ENCODE measurements at regions of chr17 and their contacts with region 1.

Region 1: GRCh38 chr17:72725433-72726068 is 366.9 kb downstream of the SLC39A11 start:
- DNase-seq: peak; percentile 88
- ATAC-seq: peak; percentile 74
- H3K4me3 ChIP-seq: no peak overlapping the region
- H3K27ac ChIP-seq: peak overlapping the region; percentile 69
- H3K4me1 ChIP-seq: peaks cover 42% of the 10 kb centered on the region
- H3K27me3 ChIP-seq: no peaks in the 10 kb centered on the region
- CTCF ChIP-seq: peak; percentile 99

Region 2: GRCh38 chr17:72556944-72557826 is 168.4 kb before region 1 on chr17:
- CTCF ChIA-PET with region 1: interaction called, 131 read pairs
- POLR2A ChIA-PET with region 1: interaction called, 3 read pairs
- intact Hi-C with region 1: loop called (anchors 1 kb)
- DNase-seq: peak; percentile 89
- ATAC-seq: peak; percentile 48
- H3K4me3 ChIP-seq: no peak overlapping the region
- H3K27ac ChIP-seq: no peak overlapping the region
- H3K4me1 ChIP-seq: peaks cover 20% of the 10 kb centered on the region
- H3K27me3 ChIP-seq: no peaks in the 10 kb centered on the region
- CTCF ChIP-seq: peak; percentile 98

Region 3: DNA sequence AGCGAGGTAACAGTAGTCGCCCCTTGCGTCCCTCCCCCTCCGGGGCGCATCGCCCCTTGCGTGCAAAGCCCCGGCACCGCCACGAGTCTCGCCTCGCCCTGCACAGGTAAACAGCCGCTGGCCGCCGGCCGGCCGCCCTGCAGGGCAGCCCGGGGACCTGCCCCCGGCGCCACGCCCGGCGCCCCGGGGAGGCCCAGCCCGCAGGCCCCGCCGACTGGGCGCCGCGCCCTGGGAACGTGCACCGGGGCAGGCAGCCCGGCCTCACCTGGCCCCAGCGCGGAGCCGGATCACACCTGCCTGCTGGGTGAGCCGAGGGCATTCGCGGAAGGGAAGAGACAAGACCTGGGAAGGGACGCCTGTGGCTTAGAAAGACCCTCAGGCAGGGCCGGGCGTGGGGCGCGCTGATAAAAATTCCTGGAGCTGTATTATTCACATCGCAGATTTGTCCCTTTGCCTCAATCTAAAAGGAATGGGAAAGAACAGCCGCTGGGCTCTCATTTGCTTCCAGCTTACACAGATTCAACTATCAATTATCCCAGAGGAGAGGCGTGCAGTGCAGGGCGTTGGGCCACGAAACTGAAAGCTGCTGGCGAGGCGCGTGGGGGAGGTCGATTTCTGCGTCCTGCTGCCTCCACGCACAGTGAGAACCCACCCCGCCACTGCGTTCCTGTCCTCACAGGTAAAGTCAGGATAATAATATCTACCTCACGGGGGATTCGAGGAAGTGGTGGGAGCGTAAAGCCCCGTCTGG is 85.0 kb before region 1 on chr17:
- CTCF ChIA-PET with region 1: no interaction called
- POLR2A ChIA-PET with region 1: no interaction called
- intact Hi-C with region 1: no loop called
- DNase-seq: peak; percentile 70
- ATAC-seq: peak; percentile 88
- H3K4me3 ChIP-seq: peak overlapping the region; percentile 49
- H3K27ac ChIP-seq: peak overlapping the region; percentile 59
- H3K4me1 ChIP-seq: peaks cover 15% of the 10 kb centered on the region
- H3K27me3 ChIP-seq: no peaks in the 10 kb centered on the region
- CTCF ChIP-seq: no peak

Region 4: GRCh38 chr17:72683506-72684404 is 41.8 kb before region 1 on chr17:
- CTCF ChIA-PET with region 1: interaction called, 5 read pairs
- POLR2A ChIA-PET with region 1: no interaction called
- intact Hi-C with region 1: loop called (anchors 1 kb)
- DNase-seq: peak; percentile 100
- ATAC-seq: peak; percentile 95
- H3K4me3 ChIP-seq: peak overlapping the region; percentile 38; the same call in 1 of the 2 replicates
- H3K27ac ChIP-seq: peak overlapping the region; percentile 97
- H3K4me1 ChIP-seq: peaks cover 44% of the 10 kb centered on the region
- H3K27me3 ChIP-seq: no peaks in the 10 kb centered on the region
- CTCF ChIP-seq: no peak

Region 5: DNA sequence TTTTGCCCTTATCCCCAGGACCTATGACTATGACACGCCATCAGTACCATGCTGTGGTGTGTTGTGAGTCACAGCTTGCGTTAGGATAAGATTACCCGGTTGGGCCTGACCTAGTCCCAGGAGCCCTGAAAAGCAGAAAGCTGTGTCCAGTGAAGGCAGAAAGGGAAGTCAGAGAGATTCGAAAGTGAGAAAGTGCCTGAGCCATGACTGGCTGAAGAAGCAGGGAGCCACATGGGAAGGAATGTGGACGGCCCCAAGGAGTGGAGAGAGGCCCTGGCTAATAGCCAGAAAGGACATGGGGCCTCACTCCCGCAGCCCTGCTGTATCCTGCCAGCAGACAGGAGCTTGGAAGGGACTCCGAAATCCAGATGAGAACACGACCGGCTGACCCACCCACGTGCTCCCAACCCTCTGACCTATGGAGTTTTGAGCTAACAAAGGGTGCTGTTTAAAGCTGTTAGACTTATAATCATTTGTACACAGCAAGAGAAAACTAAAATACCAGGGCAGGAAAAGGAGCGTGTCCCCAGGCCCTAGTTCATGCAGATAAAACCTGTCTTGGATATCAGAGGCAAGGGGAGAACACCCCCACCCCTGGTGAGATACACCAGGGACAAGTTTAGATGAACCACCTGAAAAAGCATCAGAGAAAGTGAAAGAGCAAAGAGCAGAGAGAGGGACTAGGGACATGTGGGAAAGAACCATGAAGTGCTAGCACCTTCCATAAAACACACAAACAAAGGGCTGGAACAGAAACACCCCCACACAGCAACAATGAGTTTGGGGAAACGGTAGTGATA is 251.6 kb after region 1 on chr17:
- CTCF ChIA-PET with region 1: interaction called, 13 read pairs
- POLR2A ChIA-PET with region 1: no interaction called
- intact Hi-C with region 1: no loop called
- DNase-seq: peak; percentile 82
- ATAC-seq: 0 out of 2 replicates have a peak, but pooled peaks have one; percentile 2
- H3K4me3 ChIP-seq: peak overlapping the region; percentile 1; the same call in 1 of the 2 replicates
- H3K27ac ChIP-seq: peak overlapping the region; percentile 90
- H3K4me1 ChIP-seq: peaks cover 56% of the 10 kb centered on the region
- H3K27me3 ChIP-seq: no peaks in the 10 kb centered on the region
- CTCF ChIP-seq: no peak

Region 6: GRCh38 chr17:73007407-73007806 is 281.9 kb after region 1 on chr17:
- CTCF ChIA-PET with region 1: no interaction called
- POLR2A ChIA-PET with region 1: no interaction called
- intact Hi-C with region 1: loop called (anchors 1 kb)
- DNase-seq: no peak
- ATAC-seq: no peak
- H3K4me3 ChIP-seq: no peak overlapping the region
- H3K27ac ChIP-seq: no peak overlapping the region
- H3K4me1 ChIP-seq: peaks cover 7% of the 10 kb centered on the region
- H3K27me3 ChIP-seq: no peaks in the 10 kb centered on the region
- CTCF ChIP-seq: no peak

Region 7: DNA sequence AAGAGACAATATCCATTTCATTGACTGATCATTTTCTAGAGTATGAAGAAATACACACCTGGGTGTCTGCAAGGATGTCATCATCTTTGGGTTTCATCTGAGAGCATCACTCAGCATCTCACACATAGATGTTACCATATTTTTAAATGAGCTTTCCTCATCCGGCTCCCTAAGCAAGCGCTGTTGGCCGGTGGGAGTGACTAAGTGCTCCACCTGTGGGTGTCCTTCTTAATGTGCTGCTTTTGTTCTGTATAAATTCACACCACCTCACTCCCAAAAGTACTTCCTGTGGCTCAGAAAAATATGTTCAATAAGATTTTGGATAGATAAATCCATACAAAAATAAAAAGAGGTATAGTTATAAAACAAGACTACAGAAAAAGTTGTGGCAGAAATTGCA is 446.7 kb after region 1 on chr17:
- CTCF ChIA-PET with region 1: interaction called, 11 read pairs
- POLR2A ChIA-PET with region 1: no interaction called
- intact Hi-C with region 1: no loop called
- DNase-seq: no peak
- ATAC-seq: no peak; the same call in 1 of the 2 replicates
- H3K4me3 ChIP-seq: no peak overlapping the region
- H3K27ac ChIP-seq: no peak overlapping the region
- H3K4me1 ChIP-seq: no peaks in the 10 kb centered on the region
- H3K27me3 ChIP-seq: peaks cover 9% of the 10 kb centered on the region
- CTCF ChIP-seq: no peak

Region 8: DNA sequence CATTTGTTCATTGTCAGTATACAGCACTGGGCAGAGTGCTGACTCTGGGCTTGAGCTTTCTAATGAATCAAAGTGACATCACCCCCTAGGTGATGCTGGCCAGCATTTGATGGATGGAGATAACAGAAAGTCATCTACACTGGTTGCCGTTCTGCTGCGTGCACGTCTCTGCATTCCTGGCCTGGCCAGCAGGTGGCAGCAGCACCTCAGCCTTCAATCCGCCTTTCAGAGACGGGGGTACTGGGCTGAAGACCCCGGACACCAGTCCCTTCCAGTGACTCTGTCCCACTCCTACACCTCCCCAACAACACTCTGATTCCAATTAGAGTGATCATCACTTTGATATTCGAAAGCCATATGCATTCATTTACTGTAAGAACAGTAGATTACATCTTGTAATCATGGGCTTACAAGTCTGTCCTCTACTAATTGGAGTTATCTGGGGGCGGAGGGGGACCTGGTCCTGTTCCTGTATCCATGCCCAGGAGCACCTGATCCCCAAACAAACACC is 530.2 kb after region 1 on chr17:
- CTCF ChIA-PET with region 1: no interaction called
- POLR2A ChIA-PET with region 1: no interaction called
- intact Hi-C with region 1: loop called (anchors 2 kb)
- DNase-seq: peak; percentile 78
- ATAC-seq: peak; percentile 92
- H3K4me3 ChIP-seq: no peak overlapping the region
- H3K27ac ChIP-seq: no peak overlapping the region
- H3K4me1 ChIP-seq: no peaks in the 10 kb centered on the region
- H3K27me3 ChIP-seq: no peaks in the 10 kb centered on the region
- CTCF ChIP-seq: peak; percentile 100